PC-9 (cell line): ENCODE measurements at regions of chr17 and their contacts with region 1.

Region 1: DNA sequence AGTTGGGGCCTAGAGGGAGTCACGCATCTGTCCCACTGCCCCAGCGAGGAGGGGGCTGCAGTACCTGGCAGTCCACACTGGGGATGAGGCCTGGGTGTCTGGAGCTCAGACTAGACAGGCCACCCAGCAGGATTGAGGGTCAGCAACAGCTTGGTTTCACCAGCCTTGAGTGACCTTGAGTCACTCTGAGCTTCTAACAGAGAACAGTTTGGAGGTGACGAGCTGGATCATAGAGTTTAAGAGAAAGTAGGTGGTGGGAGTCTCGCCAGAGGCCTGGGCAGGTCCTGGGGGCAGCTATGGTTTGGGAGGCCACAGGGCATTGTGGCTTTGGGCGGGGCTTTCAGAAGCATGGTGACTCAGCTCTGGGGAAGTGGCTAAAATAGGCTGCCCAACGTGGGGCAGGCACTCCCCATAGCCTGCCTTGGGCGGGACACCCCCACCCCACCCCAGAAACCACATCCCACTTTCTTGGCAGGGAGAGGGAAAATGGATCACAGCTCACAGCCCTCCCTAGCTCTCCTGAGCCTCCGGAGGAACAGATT is 20.5 kb downstream of the CDC42EP4 start:
- DNase-seq: peak; percentile 92 to 94
- H3K4me3 ChIP-seq: peak overlapping the region; percentile 46; the same call in 1 of the 2 replicates
- H3K27ac ChIP-seq: peak overlapping the region; percentile 99
- H3K4me1 ChIP-seq: peaks cover 91% of the 10 kb centered on the region
- H3K27me3 ChIP-seq: no peaks in the 10 kb centered on the region
- CTCF ChIP-seq: no peak

Region 2: DNA sequence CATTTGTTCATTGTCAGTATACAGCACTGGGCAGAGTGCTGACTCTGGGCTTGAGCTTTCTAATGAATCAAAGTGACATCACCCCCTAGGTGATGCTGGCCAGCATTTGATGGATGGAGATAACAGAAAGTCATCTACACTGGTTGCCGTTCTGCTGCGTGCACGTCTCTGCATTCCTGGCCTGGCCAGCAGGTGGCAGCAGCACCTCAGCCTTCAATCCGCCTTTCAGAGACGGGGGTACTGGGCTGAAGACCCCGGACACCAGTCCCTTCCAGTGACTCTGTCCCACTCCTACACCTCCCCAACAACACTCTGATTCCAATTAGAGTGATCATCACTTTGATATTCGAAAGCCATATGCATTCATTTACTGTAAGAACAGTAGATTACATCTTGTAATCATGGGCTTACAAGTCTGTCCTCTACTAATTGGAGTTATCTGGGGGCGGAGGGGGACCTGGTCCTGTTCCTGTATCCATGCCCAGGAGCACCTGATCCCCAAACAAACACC is 35.6 kb before region 1 on chr17:
- CTCF ChIA-PET with region 1: no interaction called
- POLR2A ChIA-PET with region 1: no interaction called
- intact Hi-C with region 1: loop called (anchors 5 kb)
- DNase-seq: peak; percentile 51 to 63
- H3K4me3 ChIP-seq: no peak overlapping the region
- H3K27ac ChIP-seq: no peak overlapping the region
- H3K4me1 ChIP-seq: no peaks in the 10 kb centered on the region
- H3K27me3 ChIP-seq: no peaks in the 10 kb centered on the region
- CTCF ChIP-seq: peak; percentile 99

Region 3: GRCh38 chr17:73340093-73340596 is 48.8 kb after region 1 on chr17:
- CTCF ChIA-PET with region 1: interaction called, 4 read pairs
- POLR2A ChIA-PET with region 1: no interaction called
- intact Hi-C with region 1: loop called (anchors 1 kb)
- DNase-seq: peak; percentile 73 to 97
- H3K4me3 ChIP-seq: no peak overlapping the region
- H3K27ac ChIP-seq: peak overlapping the region; percentile 89
- H3K4me1 ChIP-seq: peaks cover 56% of the 10 kb centered on the region
- H3K27me3 ChIP-seq: no peaks in the 10 kb centered on the region
- CTCF ChIP-seq: peak; percentile 71

Region 4: GRCh38 chr17:73371285-73371684 is 80.0 kb after region 1 on chr17:
- CTCF ChIA-PET with region 1: interaction called, 3 read pairs
- POLR2A ChIA-PET with region 1: no interaction called
- intact Hi-C with region 1: loop called (anchors 1 kb)
- DNase-seq: no peak
- H3K4me3 ChIP-seq: no peak overlapping the region
- H3K27ac ChIP-seq: no peak overlapping the region
- H3K4me1 ChIP-seq: no peaks in the 10 kb centered on the region
- H3K27me3 ChIP-seq: peaks cover 32% of the 10 kb centered on the region
- CTCF ChIP-seq: no peak